HEK293 (cell line): ENCODE measurements at regions of chr5 and their contacts with region 1.

Region 1: GRCh38 chr5:177351385-177352329 is at the start of gene LMAN2:
- H3K4me3 ChIP-seq: peak within 1 kb of the TSS; percentile 61
- H3K27ac ChIP-seq: peak within 1 kb of the TSS; percentile 92
- H3K4me1 ChIP-seq: peaks cover 20% of the 10 kb centered on the region; the same call in 1 of the 2 replicates
- CTCF ChIP-seq: no peak

Region 2: DNA sequence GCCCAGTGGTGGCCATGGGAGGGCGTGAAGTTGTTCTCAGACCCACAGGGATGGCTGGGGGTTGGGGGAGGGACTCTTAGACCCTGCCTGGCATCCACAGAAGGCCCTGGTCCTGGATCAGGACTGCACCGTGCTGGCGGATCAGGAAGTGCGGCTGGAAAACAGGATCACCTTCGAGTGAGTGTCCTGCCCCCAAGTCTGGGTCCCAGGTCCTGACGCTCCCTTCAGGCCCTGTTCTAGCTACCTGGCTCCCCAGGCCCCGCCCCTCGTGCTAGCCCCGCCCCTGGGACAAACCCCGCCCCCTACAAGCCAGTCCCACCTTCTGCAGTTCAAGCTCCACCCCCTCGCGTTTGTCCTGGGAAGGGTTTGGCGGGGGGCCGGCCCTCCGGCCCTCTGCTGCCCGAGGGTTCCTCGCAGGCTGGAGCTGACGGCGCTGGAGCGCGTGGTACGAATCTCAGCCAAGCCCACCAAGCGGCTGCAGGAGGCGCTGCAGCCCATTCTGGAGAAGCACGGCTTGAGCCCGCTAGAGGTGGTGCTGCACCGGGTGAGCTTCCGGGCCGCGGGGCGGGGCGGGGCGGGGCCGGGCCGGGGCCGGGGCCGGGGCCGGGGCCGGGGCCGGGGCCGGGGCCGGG is 18.9 kb after region 1 on chr5:
- CTCF ChIA-PET with region 1: interaction called, 26 read pairs
- POLR2A ChIA-PET with region 1: interaction called, 26 read pairs
- H3K4me3 ChIP-seq: peak overlapping the region; percentile 63
- H3K27ac ChIP-seq: peak overlapping the region; percentile 88; the same call in 1 of the 2 replicates
- H3K4me1 ChIP-seq: peaks cover 6% of the 10 kb centered on the region; the same call in 1 of the 2 replicates
- CTCF ChIP-seq: peak; percentile 63